H1 (cell line): ENCODE measurements at regions of chr5 and their contacts with region 1.

Region 1: GRCh38 chr5:175534070-175534932 is 55.9 kb downstream of the SFXN1 start:
- DNase-seq: peak; percentile 82 to 91
- H3K4me3 ChIP-seq: peak overlapping the region in 3 of 4 experiments; percentile 7 to 33 (median 14); a peak in 3 of 8 replicates
- H3K27ac ChIP-seq: no peak overlapping the region
- H3K4me1 ChIP-seq: peaks cover 0 to 17% (median 11%) of the 10 kb centered on the region in 4 experiments; a peak in 6 of 7 replicates
- H3K27me3 ChIP-seq: no peaks in the 10 kb centered on the region
- CTCF ChIP-seq: peak; percentile 100
- EP300 ChIP-seq: peak in 1 of 2 experiments; percentile 55; a peak in 1 of 3 replicates
- POLR2A ChIP-seq: no peak
- RAD21 ChIP-seq: peak; percentile 100

Region 2: DNA sequence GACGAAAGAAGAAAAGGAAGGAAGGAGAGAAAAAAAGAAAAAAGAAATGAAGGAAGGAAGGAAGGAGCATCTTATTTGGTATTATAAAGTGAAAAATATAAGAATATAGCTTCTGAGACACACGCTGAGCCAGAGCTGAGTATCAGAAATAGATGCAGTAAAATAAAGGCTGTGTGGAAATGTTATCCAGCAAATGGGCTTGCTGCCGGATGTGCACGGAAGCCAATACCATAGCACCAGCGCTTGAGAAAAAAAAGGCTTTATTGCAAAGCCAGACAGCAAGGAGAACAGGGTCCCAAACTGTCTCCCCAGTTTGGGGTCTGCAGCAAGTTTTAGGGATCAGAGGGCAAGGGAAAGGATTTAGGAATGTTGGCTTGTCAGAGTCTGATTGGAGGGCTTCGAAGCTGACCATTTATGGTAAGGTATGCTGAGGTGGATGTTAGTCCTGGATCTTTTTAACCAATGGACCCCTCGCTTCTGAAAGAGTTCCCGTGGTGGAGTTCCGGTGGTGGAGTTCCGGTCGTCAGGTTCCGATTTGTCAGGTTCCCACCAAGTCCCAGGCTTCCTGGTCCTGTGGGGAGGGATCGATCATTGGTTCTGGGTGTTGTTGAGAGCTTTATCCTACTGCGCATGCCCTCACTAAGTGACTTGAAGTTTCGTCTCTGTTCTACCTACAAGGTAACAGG is 14.5 kb after region 1 on chr5:
- CTCF ChIA-PET with region 1: interaction called, 42 read pairs
- POLR2A ChIA-PET with region 1: interaction called, 7 read pairs
- DNase-seq: peak in 1 of 2 experiments; percentile 59
- H3K4me3 ChIP-seq: peak overlapping the region in 1 of 4 experiments; percentile 38; a peak in 1 of 8 replicates
- H3K27ac ChIP-seq: peak overlapping the region; percentile 83
- H3K4me1 ChIP-seq: peaks cover 9 to 18% (median 14%) of the 10 kb centered on the region in 4 experiments
- H3K27me3 ChIP-seq: no peaks in the 10 kb centered on the region
- CTCF ChIP-seq: no peak
- EP300 ChIP-seq: no peak; a peak in 1 of 3 replicates
- POLR2A ChIP-seq: peak; percentile 54 to 67
- RAD21 ChIP-seq: no peak

Region 3: DNA sequence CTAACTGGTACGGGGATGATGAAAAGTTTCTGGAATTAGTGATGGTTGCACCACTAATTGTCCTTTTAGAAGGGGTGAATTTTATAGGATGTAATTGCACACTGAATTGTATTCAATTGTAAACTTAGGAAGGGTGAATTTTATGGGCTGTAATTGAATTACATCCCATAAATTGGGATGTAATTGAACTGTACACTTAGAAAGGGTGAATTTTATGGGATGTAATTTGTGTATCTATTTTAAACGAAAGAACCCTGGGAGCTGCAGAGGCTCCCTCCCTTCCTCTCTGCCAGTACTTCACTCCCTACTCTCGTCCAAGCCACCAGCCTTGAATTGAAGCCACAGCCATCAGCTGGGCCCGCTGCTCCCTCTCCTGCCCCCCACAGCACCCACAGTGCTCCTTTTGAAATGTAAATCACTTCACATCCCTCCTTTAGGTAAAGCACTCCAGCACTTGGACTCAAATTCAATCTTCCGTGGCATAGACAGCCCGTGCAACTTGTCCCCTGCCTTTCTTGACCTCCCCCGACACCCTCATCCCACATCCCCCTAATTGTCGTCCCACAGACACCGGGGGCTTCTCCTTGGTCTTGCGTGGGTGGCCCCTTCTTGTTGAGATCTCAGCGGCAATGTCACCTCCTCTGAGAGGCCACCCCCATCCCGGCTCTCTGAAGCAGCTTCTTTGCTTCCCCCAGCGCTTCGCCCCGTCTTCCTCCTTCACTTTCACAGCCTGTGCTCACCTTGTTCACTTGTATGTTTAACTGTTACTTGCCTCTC is 39.4 kb after region 1 on chr5:
- CTCF ChIA-PET with region 1: interaction called, 43 read pairs
- POLR2A ChIA-PET with region 1: interaction called, 4 read pairs
- DNase-seq: peak in 1 of 2 experiments; percentile 60
- H3K4me3 ChIP-seq: peak overlapping the region in 3 of 4 experiments; percentile 37 to 51 (median 46); a peak in 7 of 8 replicates
- H3K27ac ChIP-seq: no peak overlapping the region
- H3K4me1 ChIP-seq: peaks cover 4 to 7% (median 6%) of the 10 kb centered on the region in 4 experiments; a peak in 6 of 7 replicates
- H3K27me3 ChIP-seq: peaks cover 0 to 4% (median 0%) of the 10 kb centered on the region in 4 experiments; a peak in 2 of 7 replicates
- CTCF ChIP-seq: no peak
- EP300 ChIP-seq: no peak
- POLR2A ChIP-seq: no peak
- RAD21 ChIP-seq: 0 out of 4 replicates have a peak, but pooled peaks of 1 of the 2 experiments have one; percentile 2

Region 4: DNA sequence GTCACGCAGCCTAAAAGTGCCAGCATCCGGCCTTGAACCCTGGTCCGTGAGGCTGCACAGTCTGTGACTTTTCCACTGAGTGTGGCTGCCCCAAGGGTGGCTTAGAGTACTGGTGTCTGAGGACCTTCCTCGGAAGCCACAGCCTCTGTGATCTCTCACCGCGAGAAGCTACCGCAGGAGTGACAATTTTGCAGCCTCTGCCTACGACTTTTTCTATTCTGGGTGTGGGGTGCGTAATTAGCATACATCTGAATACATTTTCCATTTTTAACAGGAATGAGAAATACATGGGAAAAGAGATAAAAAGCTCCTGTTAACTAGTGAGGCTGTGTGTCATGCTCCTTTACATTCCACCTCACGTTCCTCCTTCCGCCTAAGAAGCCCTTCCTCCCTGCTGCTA is 75.2 kb after region 1 on chr5:
- CTCF ChIA-PET with region 1: interaction called, 19 read pairs
- POLR2A ChIA-PET with region 1: no interaction called
- DNase-seq: no peak
- H3K4me3 ChIP-seq: no peak overlapping the region
- H3K27ac ChIP-seq: no peak overlapping the region
- H3K4me1 ChIP-seq: peaks cover 0 to 3% (median 0%) of the 10 kb centered on the region in 4 experiments; a peak in 1 of 7 replicates
- H3K27me3 ChIP-seq: no peaks in the 10 kb centered on the region
- CTCF ChIP-seq: no peak
- EP300 ChIP-seq: no peak
- POLR2A ChIP-seq: no peak
- RAD21 ChIP-seq: no peak

Region 5: DNA sequence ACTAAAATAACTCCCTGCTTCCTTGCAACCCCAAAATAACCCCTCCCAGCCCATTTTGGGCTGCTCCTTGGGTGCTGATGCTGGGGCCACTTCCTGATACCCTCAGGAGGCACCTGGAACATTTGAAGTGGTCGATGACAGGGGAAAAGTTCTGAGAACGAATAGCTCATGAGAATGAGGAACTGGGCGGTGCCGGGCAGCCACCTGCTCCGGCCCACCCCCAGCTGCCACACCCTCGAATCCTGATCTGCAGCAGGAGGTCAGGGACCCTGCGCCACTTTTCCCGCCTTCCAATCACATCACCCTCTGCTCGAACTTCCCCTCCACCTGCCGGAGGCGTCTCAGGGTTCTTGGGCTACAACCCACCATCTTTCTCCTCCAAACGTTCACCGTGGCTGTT is 143.3 kb after region 1 on chr5:
- CTCF ChIA-PET with region 1: interaction called, 13 read pairs
- POLR2A ChIA-PET with region 1: interaction called, 3 read pairs
- DNase-seq: no peak
- H3K4me3 ChIP-seq: no peak overlapping the region
- H3K27ac ChIP-seq: no peak overlapping the region
- H3K4me1 ChIP-seq: no peaks in the 10 kb centered on the region
- H3K27me3 ChIP-seq: no peaks in the 10 kb centered on the region
- CTCF ChIP-seq: no peak
- EP300 ChIP-seq: no peak
- POLR2A ChIP-seq: no peak
- RAD21 ChIP-seq: no peak

Region 6: DNA sequence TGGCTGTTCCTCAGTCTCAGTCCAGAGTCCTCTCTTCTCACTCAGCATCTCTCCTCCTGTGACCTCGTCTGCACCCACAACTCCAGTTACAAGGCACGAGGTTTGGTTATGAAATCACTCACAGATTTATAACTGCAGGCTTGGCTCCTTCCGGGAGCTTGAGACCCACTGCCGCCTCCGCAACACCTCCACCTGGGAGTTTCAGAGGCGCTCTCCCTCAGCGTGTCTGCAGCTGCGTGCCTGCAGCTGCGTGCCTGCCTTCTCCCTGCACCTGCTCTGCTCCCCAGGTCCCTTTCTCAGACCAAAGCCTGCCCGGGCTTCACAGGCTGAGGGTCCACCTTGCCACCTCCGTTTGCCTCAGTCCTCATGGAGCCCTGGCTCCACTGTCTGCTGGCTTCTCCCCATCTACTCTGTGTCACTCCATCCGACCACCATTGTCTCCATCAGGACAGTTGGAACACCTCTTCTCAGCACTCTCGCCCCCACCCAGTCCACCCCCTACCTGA is 175.0 kb after region 1 on chr5:
- CTCF ChIA-PET with region 1: interaction called, 46 read pairs
- POLR2A ChIA-PET with region 1: interaction called, 3 read pairs
- DNase-seq: no peak
- H3K4me3 ChIP-seq: no peak overlapping the region
- H3K27ac ChIP-seq: no peak overlapping the region
- H3K4me1 ChIP-seq: no peaks in the 10 kb centered on the region
- H3K27me3 ChIP-seq: peaks cover 0 to 6% (median 0%) of the 10 kb centered on the region in 4 experiments; a peak in 1 of 7 replicates
- CTCF ChIP-seq: no peak
- EP300 ChIP-seq: no peak
- POLR2A ChIP-seq: no peak
- RAD21 ChIP-seq: no peak